CD4-positive, alpha-beta T cell (primary cell): ENCODE measurements at regions of chr3 and their contacts with region 1.

Region 1: DNA sequence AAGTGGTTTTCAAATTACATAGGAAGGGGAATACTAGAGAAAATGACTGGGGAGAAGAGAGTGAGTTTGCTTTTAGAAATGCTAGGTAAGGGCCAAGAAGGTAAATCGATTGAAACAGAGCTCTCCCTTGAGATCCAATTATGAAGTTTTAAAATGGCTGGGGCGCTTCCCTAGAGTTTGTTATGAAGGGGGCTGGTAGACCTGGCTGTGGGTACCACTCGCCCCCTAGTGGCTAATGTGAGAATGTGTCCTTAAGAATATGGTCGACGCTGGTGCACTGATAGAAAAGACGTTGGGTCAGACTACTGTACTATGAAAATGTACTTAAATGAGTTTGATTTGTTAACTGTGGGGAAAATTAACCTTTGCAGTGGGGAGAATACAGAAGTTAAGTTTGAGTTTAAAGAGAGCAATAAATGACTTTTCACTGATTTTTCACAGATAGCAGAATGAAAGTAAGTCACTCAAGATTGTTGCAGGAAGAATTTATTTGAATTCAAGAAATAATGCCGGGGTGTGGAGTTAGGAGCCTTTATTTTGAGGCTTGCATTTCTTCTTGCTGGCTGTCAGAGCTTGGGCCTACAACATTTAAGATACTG is 9.2 kb downstream of the TMPRSS7 start:
- DNase-seq: peak; percentile 4 to 79 (median 26)
- ATAC-seq: peak; percentile 99
- H3K4me3 ChIP-seq: no peak overlapping the region
- H3K4me3 Mint-ChIP-seq: no peak overlapping the region
- H3K27ac ChIP-seq: no peak overlapping the region
- H3K27ac Mint-ChIP-seq: no peak overlapping the region
- H3K4me1 ChIP-seq: no peaks in the 10 kb centered on the region
- H3K4me1 Mint-ChIP-seq: no peaks in the 10 kb centered on the region
- H3K27me3 ChIP-seq: no peaks in the 10 kb centered on the region
- H3K27me3 Mint-ChIP-seq: no peaks in the 10 kb centered on the region
- CTCF ChIP-seq: peak; percentile 94

Region 2: DNA sequence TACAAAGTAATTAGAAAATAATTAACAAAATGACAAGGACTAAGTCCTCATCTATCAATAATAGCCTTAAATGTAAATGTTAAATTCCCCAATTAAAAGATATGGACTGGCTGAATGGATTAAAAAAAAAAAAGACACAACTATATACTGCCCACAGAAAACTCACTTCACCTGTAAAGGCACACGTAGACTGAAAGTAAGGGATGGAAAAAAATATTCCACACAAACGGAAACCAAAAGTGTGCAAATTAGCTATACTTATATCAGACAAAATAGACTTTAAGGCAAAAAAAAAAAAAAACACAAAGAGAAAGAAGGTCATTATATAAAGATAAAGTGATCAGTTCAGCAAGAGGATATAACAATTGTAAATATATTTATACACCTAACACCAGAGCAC is 337.2 kb before region 1 on chr3:
- CTCF ChIA-PET with region 1: no interaction called
- POLR2A ChIA-PET with region 1: no interaction called
- intact Hi-C with region 1: no loop called
- DNase-seq: no peak
- ATAC-seq: no peak
- H3K4me3 ChIP-seq: no peak overlapping the region
- H3K4me3 Mint-ChIP-seq: no peak overlapping the region
- H3K27ac ChIP-seq: no peak overlapping the region
- H3K27ac Mint-ChIP-seq: no peak overlapping the region
- H3K4me1 ChIP-seq: no peaks in the 10 kb centered on the region
- H3K4me1 Mint-ChIP-seq: peaks cover 35% of the 10 kb centered on the region
- H3K27me3 ChIP-seq: no peaks in the 10 kb centered on the region
- H3K27me3 Mint-ChIP-seq: no peaks in the 10 kb centered on the region
- CTCF ChIP-seq: no peak

Region 3: DNA sequence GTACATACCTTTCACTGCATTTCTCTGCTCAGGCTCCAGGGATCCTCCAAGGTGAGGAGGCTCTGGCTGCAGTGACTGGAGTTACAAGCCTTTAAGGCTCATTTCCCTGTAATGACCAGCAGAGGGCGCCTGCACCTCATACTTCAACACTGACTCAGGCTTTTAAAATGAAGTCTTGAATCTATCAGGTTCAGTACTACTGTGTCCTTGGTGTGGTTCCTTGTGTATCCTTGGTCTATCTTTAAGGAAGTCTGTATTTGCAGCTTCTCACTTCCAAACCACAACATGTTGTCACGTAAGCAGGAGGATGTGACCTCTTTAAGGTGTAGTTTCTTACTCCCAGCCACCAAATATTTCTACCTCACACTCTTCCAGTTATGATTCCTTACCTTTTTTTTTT is 326.1 kb before region 1 on chr3:
- CTCF ChIA-PET with region 1: interaction called, 4 read pairs
- POLR2A ChIA-PET with region 1: no interaction called
- intact Hi-C with region 1: loop called in 1 of 2 experiments (anchors 1 kb)
- DNase-seq: peak; percentile 36 to 85 (median 54)
- ATAC-seq: peak; percentile 96
- H3K4me3 ChIP-seq: no peak overlapping the region
- H3K4me3 Mint-ChIP-seq: no peak overlapping the region
- H3K27ac ChIP-seq: no peak overlapping the region
- H3K27ac Mint-ChIP-seq: no peak overlapping the region
- H3K4me1 ChIP-seq: no peaks in the 10 kb centered on the region
- H3K4me1 Mint-ChIP-seq: no peaks in the 10 kb centered on the region
- H3K27me3 ChIP-seq: no peaks in the 10 kb centered on the region
- H3K27me3 Mint-ChIP-seq: no peaks in the 10 kb centered on the region
- CTCF ChIP-seq: peak; percentile 90

Region 4: DNA sequence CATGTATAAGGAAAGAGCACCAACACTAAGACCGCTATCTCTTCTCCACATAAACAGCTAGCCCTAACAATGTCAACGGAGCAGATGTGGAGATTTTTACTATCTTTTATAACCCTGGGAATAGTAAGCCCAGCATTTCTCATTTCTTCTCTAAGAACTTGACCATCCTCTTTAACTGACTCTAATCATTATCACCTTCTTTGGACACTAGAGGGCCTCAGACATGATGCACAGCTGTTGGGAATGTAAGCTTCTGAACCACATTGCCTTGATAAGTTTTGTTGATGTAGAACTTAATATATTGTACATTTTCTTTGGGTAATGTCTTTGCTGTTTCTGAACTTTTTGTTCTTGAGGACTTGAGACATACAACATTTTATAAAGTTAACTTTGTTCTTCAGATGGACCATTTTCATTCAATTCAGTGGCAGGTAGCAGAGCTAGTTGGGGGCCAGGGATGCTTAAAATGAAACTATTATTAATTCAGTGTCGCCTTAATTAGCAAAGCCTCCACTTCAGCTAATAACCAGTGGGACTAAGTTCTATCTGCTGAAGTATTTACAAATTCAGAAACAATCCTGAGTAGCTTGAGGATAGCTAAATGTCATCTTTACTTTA is 54.5 kb before region 1 on chr3:
- CTCF ChIA-PET with region 1: interaction called, 4 read pairs
- POLR2A ChIA-PET with region 1: no interaction called
- intact Hi-C with region 1: loop called in 1 of 2 experiments (anchors 5 kb)
- DNase-seq: peak in 3 of 14 experiments; percentile 54 to 64 (median 61)
- ATAC-seq: peak; percentile 77
- H3K4me3 ChIP-seq: no peak overlapping the region
- H3K4me3 Mint-ChIP-seq: no peak overlapping the region
- H3K27ac ChIP-seq: no peak overlapping the region
- H3K27ac Mint-ChIP-seq: no peak overlapping the region
- H3K4me1 ChIP-seq: no peaks in the 10 kb centered on the region
- H3K4me1 Mint-ChIP-seq: peaks cover 45% of the 10 kb centered on the region
- H3K27me3 ChIP-seq: no peaks in the 10 kb centered on the region
- H3K27me3 Mint-ChIP-seq: no peaks in the 10 kb centered on the region
- CTCF ChIP-seq: peak; percentile 81

Region 5: GRCh38 chr3:112056451-112056978 is 12.8 kb after region 1 on chr3:
- CTCF ChIA-PET with region 1: no interaction called
- POLR2A ChIA-PET with region 1: no interaction called
- intact Hi-C with region 1: no loop called
- DNase-seq: no peak
- ATAC-seq: no peak
- H3K4me3 ChIP-seq: no peak overlapping the region
- H3K4me3 Mint-ChIP-seq: no peak overlapping the region
- H3K27ac ChIP-seq: no peak overlapping the region
- H3K27ac Mint-ChIP-seq: no peak overlapping the region
- H3K4me1 ChIP-seq: no peaks in the 10 kb centered on the region
- H3K4me1 Mint-ChIP-seq: no peaks in the 10 kb centered on the region
- H3K27me3 ChIP-seq: no peaks in the 10 kb centered on the region
- H3K27me3 Mint-ChIP-seq: no peaks in the 10 kb centered on the region
- CTCF ChIP-seq: no peak

Region 6: GRCh38 chr3:112086076-112086854 is 42.6 kb after region 1 on chr3 and contains the start of gene C3orf52:
- CTCF ChIA-PET with region 1: no interaction called
- POLR2A ChIA-PET with region 1: no interaction called
- intact Hi-C with region 1: loop called in 1 of 2 experiments (anchors 5 kb)
- DNase-seq: peak; percentile 14 to 77 (median 42)
- ATAC-seq: peak; percentile 77
- H3K4me3 ChIP-seq: peak within 1 kb of the TSS; percentile 71
- H3K4me3 Mint-ChIP-seq: peak within 1 kb of the TSS; percentile 85
- H3K27ac ChIP-seq: no peak within 1 kb of the TSS
- H3K27ac Mint-ChIP-seq: peak within 1 kb of the TSS; percentile 81
- H3K4me1 ChIP-seq: peaks cover 33% of the 10 kb centered on the region
- H3K4me1 Mint-ChIP-seq: peaks cover 65% of the 10 kb centered on the region
- H3K27me3 ChIP-seq: no peaks in the 10 kb centered on the region
- H3K27me3 Mint-ChIP-seq: no peaks in the 10 kb centered on the region
- CTCF ChIP-seq: no peak
- total RNA-seq, gene C3orf52: 1.6 to 2.7 TPM

Region 7: DNA sequence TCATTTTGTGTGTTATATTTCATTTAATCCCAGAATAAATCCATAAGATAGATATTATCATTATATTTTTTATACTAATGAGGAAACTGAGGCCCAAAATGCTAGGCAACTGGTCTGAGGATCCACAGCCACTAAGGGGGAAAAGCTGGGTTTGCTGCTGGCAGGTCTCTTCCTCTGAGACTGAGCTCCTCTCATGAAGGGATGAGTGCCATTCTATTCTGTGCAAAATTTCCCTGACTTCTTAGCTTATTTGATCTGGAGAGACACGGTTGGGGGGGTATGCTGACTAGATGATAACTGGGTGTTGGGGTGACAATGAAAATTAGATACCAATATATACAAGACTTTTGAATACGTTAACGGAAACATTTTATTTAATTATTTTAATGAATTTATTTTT is 87.4 kb after region 1 on chr3:
- CTCF ChIA-PET with region 1: no interaction called
- POLR2A ChIA-PET with region 1: no interaction called
- intact Hi-C with region 1: no loop called
- DNase-seq: no peak
- ATAC-seq: no peak
- H3K4me3 ChIP-seq: peak overlapping the region; percentile 60
- H3K4me3 Mint-ChIP-seq: peak overlapping the region; percentile 52
- H3K27ac ChIP-seq: peak overlapping the region; percentile 41 to 92
- H3K27ac Mint-ChIP-seq: peak overlapping the region; percentile 88
- H3K4me1 ChIP-seq: peaks cover 80% of the 10 kb centered on the region
- H3K4me1 Mint-ChIP-seq: peaks cover 95% of the 10 kb centered on the region
- H3K27me3 ChIP-seq: no peaks in the 10 kb centered on the region
- H3K27me3 Mint-ChIP-seq: no peaks in the 10 kb centered on the region
- CTCF ChIP-seq: no peak

Region 8: GRCh38 chr3:113174801-113175485 is 1131.2 kb after region 1 on chr3:
- CTCF ChIA-PET with region 1: no interaction called
- POLR2A ChIA-PET with region 1: no interaction called
- intact Hi-C with region 1: no loop called
- DNase-seq: no peak
- ATAC-seq: no peak
- H3K4me3 ChIP-seq: no peak overlapping the region
- H3K4me3 Mint-ChIP-seq: no peak overlapping the region
- H3K27ac ChIP-seq: no peak overlapping the region
- H3K27ac Mint-ChIP-seq: no peak overlapping the region
- H3K4me1 ChIP-seq: no peaks in the 10 kb centered on the region
- H3K4me1 Mint-ChIP-seq: no peaks in the 10 kb centered on the region
- H3K27me3 ChIP-seq: peaks cover 3 to 6% of the 10 kb centered on the region in 2 experiments
- H3K27me3 Mint-ChIP-seq: no peaks in the 10 kb centered on the region
- CTCF ChIP-seq: no peak